ENCODE measurements at regions of chr17 and their contacts with region 1.

Region 1: GRCh38 chr17:58517734-58518609 is 3.5 kb upstream of the MTMR4 start:
- DNase-seq: peak; percentile 100
- H3K4me3 Mint-ChIP-seq: peak overlapping the region; percentile 86
- H3K27ac Mint-ChIP-seq: peak overlapping the region; percentile 91
- H3K4me1 Mint-ChIP-seq: peaks cover 32% of the 10 kb centered on the region
- H3K27me3 Mint-ChIP-seq: no peaks in the 10 kb centered on the region

Region 2: DNA sequence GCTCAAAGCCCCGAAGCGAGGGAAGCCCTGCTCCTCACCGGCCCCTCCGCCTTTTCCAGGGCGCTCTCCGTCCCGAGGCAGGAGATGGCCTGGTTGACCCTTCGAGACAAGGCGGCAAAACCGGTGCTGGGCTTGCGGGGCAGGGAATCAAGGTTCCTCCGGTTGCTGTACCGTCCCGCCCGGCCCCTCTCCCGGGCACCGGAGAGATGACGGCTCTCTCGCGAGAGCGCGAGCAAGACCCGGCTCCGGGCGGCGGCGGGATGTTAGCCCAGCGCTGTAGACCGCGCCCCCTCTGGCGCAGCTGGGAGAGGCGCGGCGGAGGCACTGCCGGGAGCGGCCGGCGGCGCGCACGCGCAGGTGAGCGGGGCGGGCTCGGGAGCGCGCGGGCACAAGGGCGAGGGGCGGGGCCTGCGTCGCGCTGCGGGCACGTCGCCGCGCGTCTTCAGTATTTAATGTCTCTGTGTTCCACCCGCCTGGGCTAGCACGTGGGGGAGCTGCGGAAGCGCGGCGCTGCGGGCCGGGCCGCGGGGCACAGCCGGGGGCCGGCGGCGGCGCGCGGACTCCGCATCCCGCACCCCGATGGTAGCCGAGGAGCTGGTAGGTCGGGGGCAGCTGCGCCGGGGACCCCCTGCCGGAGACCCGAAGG is 1433.0 kb before region 1 on chr17 and contains the start of gene AKAP1:
- intact Hi-C with region 1: loop called (anchors 10 kb)
- DNase-seq: peak; percentile 96
- H3K4me3 Mint-ChIP-seq: peak within 1 kb of the TSS; percentile 92
- H3K27ac Mint-ChIP-seq: peak within 1 kb of the TSS; percentile 87
- H3K4me1 Mint-ChIP-seq: peaks cover 28% of the 10 kb centered on the region
- H3K27me3 Mint-ChIP-seq: peaks cover 9% of the 10 kb centered on the region
- total RNA-seq, gene AKAP1: 53.8 and 59.9 TPM in 2 replicates

Region 3: DNA sequence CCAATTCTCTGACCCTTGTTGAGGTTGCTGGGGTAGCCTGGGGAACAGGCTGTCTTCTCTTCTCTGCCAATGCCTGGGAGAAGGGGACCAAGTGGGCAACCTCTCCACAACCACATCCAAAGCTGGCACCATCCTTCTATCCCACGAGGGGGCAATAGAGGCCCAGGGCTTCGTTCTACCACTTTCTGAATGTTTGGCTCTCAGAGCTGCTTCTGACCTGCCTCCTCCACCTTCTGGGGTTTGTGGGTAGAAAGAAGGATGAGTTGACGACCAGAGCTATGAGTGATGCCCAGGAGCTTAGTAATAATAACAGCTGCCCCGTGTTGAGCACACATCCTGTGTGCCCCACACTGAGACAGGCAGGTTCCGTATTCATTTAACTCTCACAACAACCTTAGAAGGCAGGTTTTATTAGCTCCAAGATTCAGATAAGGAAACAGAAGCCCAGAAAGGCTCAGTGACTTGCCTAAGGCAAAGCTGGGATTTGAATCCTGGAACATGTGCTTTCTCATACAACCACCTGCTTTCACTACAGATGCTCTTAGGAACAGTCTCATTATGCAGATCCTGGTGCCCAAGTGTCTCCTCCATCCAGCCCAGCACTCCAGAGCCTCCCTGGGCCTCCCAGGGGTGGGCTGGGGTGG is 200.4 kb before region 1 on chr17:
- intact Hi-C with region 1: loop called (anchors 1 kb)
- DNase-seq: peak; percentile 55
- H3K4me3 Mint-ChIP-seq: no peak overlapping the region
- H3K27ac Mint-ChIP-seq: peak overlapping the region; percentile 87
- H3K4me1 Mint-ChIP-seq: peaks cover 28% of the 10 kb centered on the region
- H3K27me3 Mint-ChIP-seq: no peaks in the 10 kb centered on the region

Region 4: GRCh38 chr17:58352014-58352842 is 165.7 kb before region 1 on chr17 and contains the start of gene SUPT4H1:
- intact Hi-C with region 1: loop called (anchors 1 kb)
- DNase-seq: peak; percentile 90
- H3K4me3 Mint-ChIP-seq: peak within 1 kb of the TSS; percentile 100
- H3K27ac Mint-ChIP-seq: peak within 1 kb of the TSS; percentile 96
- H3K4me1 Mint-ChIP-seq: peaks cover 57% of the 10 kb centered on the region
- H3K27me3 Mint-ChIP-seq: no peaks in the 10 kb centered on the region
- total RNA-seq, gene SUPT4H1: 138 and 142 TPM in 2 replicates

Region 5: GRCh38 chr17:58631523-58632323 is 113.8 kb after region 1 on chr17:
- intact Hi-C with region 1: loop called (anchors 1 kb)
- DNase-seq: peak; percentile 96
- H3K4me3 Mint-ChIP-seq: no peak overlapping the region
- H3K27ac Mint-ChIP-seq: no peak overlapping the region
- H3K4me1 Mint-ChIP-seq: peaks cover 4% of the 10 kb centered on the region
- H3K27me3 Mint-ChIP-seq: no peaks in the 10 kb centered on the region

Region 6: DNA sequence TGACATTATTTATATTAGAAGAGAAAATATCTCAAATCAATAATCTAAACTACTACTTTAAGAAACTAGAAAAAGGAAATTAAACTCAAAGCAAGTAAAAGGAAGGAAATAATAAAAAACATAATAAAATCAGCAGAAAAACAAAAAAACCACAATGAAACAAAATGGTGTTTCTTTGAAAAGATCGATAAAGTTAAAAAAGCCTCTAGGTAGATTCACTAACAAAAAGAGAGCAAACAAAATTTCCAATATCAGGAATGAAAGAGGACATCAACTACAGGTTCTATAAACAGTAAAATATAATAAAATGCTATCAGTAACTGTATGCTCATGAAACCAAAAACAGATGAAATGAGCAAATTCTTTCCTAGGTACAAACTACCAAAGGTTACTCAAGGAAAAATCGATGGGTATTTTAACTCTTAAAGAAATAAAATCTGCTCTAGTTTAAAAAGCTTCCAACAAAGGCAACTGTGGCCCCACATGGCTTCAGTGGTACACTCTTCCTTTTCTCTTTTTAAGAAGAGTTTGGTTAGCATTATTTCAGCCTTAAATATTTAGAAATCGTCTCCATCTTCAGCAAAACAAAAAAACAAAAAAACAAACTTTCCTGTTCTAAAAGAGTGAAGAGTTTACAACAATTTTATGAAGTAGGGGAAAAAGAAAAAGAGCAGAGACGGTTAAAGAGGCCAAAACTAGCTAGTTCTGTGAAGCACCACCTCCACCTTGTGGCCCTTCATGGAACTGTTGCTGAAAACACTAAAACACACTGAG is 486.6 kb after region 1 on chr17:
- intact Hi-C with region 1: loop called (anchors 1 kb)
- DNase-seq: peak; percentile 44
- H3K4me3 Mint-ChIP-seq: peak overlapping the region; percentile 46
- H3K27ac Mint-ChIP-seq: peak overlapping the region; percentile 61
- H3K4me1 Mint-ChIP-seq: peaks cover 22% of the 10 kb centered on the region
- H3K27me3 Mint-ChIP-seq: no peaks in the 10 kb centered on the region

Region 7: GRCh38 chr17:60392042-60392844 is 1874.3 kb after region 1 on chr17 and contains the start of gene USP32:
- intact Hi-C with region 1: loop called (anchors 10 kb)
- DNase-seq: peak; percentile 97
- H3K4me3 Mint-ChIP-seq: peak within 1 kb of the TSS; percentile 97
- H3K27ac Mint-ChIP-seq: peak within 1 kb of the TSS; percentile 95
- H3K4me1 Mint-ChIP-seq: peaks cover 50% of the 10 kb centered on the region
- H3K27me3 Mint-ChIP-seq: no peaks in the 10 kb centered on the region
- total RNA-seq, gene USP32: 30.5 and 31.2 TPM in 2 replicates

Measured in activated T-helper 1 cell treated with anti-CD3 and anti-CD28 coated beads, Interleukin-12 subunit alpha, Interleukin-12 subunit beta, Interleukin-2, Interleukin-4 antibody, amounts not matched to agents 30 ng/mL and 10 ng/mL and 1 ng/mL, durations not matched to agents 14 hours and 24 hours and 36 hours (primary cell).